H1 (cell line): ENCODE measurements at regions of chr14 and their contacts with region 1.

Region 1: GRCh38 chr14:22872033-22872832 is 693 bp downstream of the LRP10 start:
- DNase-seq: peak in 1 of 2 experiments; percentile 94
- H3K4me3 ChIP-seq: peak overlapping the region; percentile 64 to 86 (median 80)
- H3K27ac ChIP-seq: no peak overlapping the region
- H3K4me1 ChIP-seq: peaks cover 0 to 9% (median 3%) of the 10 kb centered on the region in 4 experiments; a peak in 4 of 7 replicates
- H3K27me3 ChIP-seq: no peaks in the 10 kb centered on the region
- CTCF ChIP-seq: peak; percentile 81 to 94 (median 91)
- EP300 ChIP-seq: 0 out of 3 replicates have a peak, but pooled peaks of 1 of the 2 experiments have one; percentile 59
- POLR2A ChIP-seq: peak in 1 of 2 experiments; percentile 28; a peak in 1 of 3 replicates
- RAD21 ChIP-seq: peak; percentile 75 to 84

Region 2: DNA sequence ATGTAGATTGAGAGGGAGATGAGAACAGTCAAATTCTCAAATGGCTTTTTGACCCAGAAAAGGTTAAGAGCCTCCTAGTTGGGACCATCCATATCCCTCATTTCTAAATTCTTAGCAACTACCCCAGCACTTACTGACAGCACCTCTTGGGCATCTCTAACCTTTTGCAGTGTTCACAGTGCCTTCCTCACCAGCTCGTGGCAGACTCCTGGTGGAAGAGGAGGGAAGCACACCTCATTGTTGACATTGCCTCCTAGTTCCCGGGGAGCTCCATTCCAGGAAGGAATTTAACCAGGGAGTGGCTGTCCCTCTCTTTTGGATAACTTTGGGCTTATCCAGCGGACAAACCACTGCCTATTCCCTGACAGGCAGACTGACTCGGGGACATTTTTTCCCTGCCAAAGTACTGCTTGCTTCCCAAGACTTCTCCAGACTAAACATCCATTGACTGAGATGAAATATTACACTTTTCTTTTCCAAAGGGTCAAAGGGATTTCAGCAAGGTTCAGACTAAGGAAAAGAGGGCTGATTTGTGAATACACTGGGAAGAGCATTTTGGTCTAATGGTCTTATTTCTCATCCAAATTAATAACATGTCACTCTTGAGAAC is 219.1 kb before region 1 on chr14:
- CTCF ChIA-PET with region 1: no interaction called
- POLR2A ChIA-PET with region 1: no interaction called
- DNase-seq: peak; percentile 62 to 84
- H3K4me3 ChIP-seq: no peak overlapping the region
- H3K27ac ChIP-seq: no peak overlapping the region
- H3K4me1 ChIP-seq: no peaks in the 10 kb centered on the region
- H3K27me3 ChIP-seq: 0 out of 7 replicates have a peak, but pooled peaks cover 0 to 2% (median 0%) of the 10 kb centered on the region in 4 experiments
- CTCF ChIP-seq: peak; percentile 87 to 94 (median 89)
- EP300 ChIP-seq: no peak
- POLR2A ChIP-seq: no peak
- RAD21 ChIP-seq: peak; percentile 87

Region 3: GRCh38 chr14:22829661-22830442 is 42.4 kb before region 1 on chr14 and contains the start of gene MRPL52:
- CTCF ChIA-PET with region 1: interaction called, 1,562 read pairs
- POLR2A ChIA-PET with region 1: interaction called, 6 read pairs
- DNase-seq: peak in 1 of 2 experiments; percentile 80
- H3K4me3 ChIP-seq: peak within 1 kb of the TSS; percentile 86 to 89 (median 88)
- H3K27ac ChIP-seq: peak within 1 kb of the TSS; percentile 43; the same call in 1 of the 2 replicates
- H3K4me1 ChIP-seq: peaks cover 0 to 5% (median 0%) of the 10 kb centered on the region in 4 experiments; a peak in 2 of 7 replicates
- H3K27me3 ChIP-seq: no peaks in the 10 kb centered on the region
- CTCF ChIP-seq: no peak
- EP300 ChIP-seq: 0 out of 3 replicates have a peak, but pooled peaks of 1 of the 2 experiments have one; percentile 29
- POLR2A ChIP-seq: peak in 1 of 2 experiments; percentile 61; a peak in 2 of 3 replicates
- RAD21 ChIP-seq: no peak
- total RNA-seq, gene MRPL52: 172 and 176 TPM in 2 replicates

Region 4: DNA sequence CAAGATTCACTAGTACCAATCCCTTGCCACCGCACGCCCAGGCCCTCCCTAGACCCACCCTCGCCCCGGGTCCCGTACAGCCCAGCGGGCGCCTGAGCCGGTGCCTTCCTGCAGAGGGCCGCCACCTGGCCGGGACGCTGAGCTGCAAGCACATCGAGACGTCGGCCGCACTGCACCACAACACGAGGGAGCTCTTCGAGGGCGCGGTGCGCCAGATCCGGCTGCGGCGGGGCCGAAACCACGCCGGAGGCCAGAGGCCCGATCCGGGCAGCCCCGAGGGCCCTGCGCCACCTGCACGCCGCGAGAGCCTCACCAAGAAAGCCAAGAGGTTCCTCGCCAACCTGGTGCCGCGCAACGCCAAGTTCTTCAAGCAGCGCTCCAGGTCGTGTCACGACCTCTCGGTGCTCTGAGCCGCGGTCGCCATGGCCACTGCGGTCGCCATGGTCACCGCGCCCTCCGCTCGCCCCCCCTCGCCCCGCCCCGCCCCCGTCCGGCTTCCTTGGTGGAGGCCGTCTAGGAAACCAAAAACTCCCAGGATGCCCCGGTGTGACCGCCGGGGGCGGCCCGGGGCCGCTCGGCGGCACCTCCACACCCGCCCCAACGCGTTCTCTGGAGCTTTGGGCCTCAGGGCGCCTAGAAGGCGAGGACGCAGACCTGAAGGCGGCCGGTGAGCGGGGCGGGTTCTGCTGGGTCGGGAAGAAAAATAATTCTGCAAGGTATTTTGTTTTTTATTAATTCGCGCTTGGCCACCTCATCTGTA is 14.4 kb after region 1 on chr14:
- CTCF ChIA-PET with region 1: interaction called, 135 read pairs
- POLR2A ChIA-PET with region 1: interaction called, 54 read pairs
- DNase-seq: peak in 1 of 2 experiments; percentile 87
- H3K4me3 ChIP-seq: peak overlapping the region; percentile 57 to 83 (median 65)
- H3K27ac ChIP-seq: peak overlapping the region; percentile 25
- H3K4me1 ChIP-seq: peaks cover 7 to 21% (median 12%) of the 10 kb centered on the region in 4 experiments
- H3K27me3 ChIP-seq: peaks cover 0 to 17% (median 11%) of the 10 kb centered on the region in 4 experiments; a peak in 6 of 7 replicates
- CTCF ChIP-seq: peak; percentile 17 to 35 (median 21); a peak in 3 of 4 replicates
- EP300 ChIP-seq: no peak
- POLR2A ChIP-seq: peak in 1 of 2 experiments; percentile 75; a peak in 2 of 3 replicates
- RAD21 ChIP-seq: peak in 1 of 2 experiments; percentile 6; a peak in 2 of 4 replicates

Region 5: GRCh38 chr14:22900081-22900799 is 28.0 kb after region 1 on chr14:
- CTCF ChIA-PET with region 1: interaction called, 135 read pairs
- POLR2A ChIA-PET with region 1: interaction called, 3 read pairs
- DNase-seq: peak in 1 of 2 experiments; percentile 58
- H3K4me3 ChIP-seq: 0 out of 8 replicates have a peak overlapping the region, but pooled peaks of 1 of the 4 experiments have one; percentile 13
- H3K27ac ChIP-seq: no peak overlapping the region
- H3K4me1 ChIP-seq: peaks cover 0 to 8% (median 4%) of the 10 kb centered on the region in 4 experiments; a peak in 2 of 7 replicates
- H3K27me3 ChIP-seq: peaks cover 10 to 35% (median 28%) of the 10 kb centered on the region in 4 experiments
- CTCF ChIP-seq: peak; percentile 1 to 75 (median 64)
- EP300 ChIP-seq: no peak
- POLR2A ChIP-seq: no peak
- RAD21 ChIP-seq: peak; percentile 64 to 75

Region 6: DNA sequence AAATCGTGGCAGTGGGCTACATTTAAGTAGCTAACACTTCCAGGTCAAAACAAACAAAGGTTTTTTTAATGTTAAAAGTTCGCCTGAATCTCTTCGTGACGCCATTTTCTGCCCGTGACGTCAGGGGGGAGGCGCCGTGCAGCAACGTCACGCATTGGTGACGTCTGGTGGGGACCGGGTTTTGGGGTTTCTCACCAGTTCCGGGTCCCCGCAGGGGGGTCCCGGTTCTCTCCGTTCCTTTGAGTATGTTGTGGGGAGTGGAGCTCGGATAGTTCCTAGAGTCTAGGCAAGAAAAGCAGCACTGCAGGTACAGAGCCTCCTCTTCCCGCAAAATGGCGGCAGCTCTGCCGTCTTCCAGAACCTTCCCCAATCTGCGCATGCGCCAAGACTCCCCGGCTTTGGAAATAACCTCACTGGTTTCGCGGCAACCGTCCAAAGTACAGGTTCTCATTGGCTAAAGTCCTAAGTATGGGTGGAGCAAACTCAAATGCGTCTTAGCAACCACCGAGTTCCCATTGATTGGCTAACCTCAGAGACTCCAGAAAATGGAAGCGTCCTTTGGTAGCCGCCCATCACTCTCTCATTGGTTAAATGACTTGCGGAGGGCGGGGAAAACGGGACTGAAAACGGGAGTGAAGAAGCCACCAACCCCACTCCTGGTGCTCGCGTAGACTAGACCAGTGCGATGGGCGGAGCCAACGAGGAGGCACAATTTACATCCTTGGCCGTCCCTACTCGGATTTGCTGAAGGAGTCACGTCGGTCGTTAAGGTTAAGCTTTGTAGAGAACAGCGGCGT is 46.8 kb after region 1 on chr14 and contains the start of gene RBM23:
- CTCF ChIA-PET with region 1: interaction called, 3 read pairs
- POLR2A ChIA-PET with region 1: interaction called, 16 read pairs
- DNase-seq: peak; percentile 98 to 99
- H3K4me3 ChIP-seq: peak within 1 kb of the TSS; percentile 79 to 93 (median 92)
- H3K27ac ChIP-seq: peak within 1 kb of the TSS; percentile 98
- H3K4me1 ChIP-seq: peaks cover 0 to 7% (median 3%) of the 10 kb centered on the region in 4 experiments; a peak in 5 of 7 replicates
- H3K27me3 ChIP-seq: no peaks in the 10 kb centered on the region; a peak in 1 of 7 replicates
- CTCF ChIP-seq: no peak
- EP300 ChIP-seq: no peak
- POLR2A ChIP-seq: peak; percentile 80 to 98
- RAD21 ChIP-seq: no peak
- total RNA-seq, gene RBM23: 43.1 and 43.3 TPM in 2 replicates

Region 7: GRCh38 chr14:22997676-22998323 is 125.6 kb after region 1 on chr14:
- CTCF ChIA-PET with region 1: no interaction called
- POLR2A ChIA-PET with region 1: no interaction called
- DNase-seq: no peak
- H3K4me3 ChIP-seq: no peak overlapping the region
- H3K27ac ChIP-seq: no peak overlapping the region
- H3K4me1 ChIP-seq: peaks cover 0 to 5% (median 2%) of the 10 kb centered on the region in 4 experiments; a peak in 2 of 7 replicates
- H3K27me3 ChIP-seq: no peaks in the 10 kb centered on the region
- CTCF ChIP-seq: no peak
- EP300 ChIP-seq: no peak
- POLR2A ChIP-seq: no peak
- RAD21 ChIP-seq: no peak

Region 8: DNA sequence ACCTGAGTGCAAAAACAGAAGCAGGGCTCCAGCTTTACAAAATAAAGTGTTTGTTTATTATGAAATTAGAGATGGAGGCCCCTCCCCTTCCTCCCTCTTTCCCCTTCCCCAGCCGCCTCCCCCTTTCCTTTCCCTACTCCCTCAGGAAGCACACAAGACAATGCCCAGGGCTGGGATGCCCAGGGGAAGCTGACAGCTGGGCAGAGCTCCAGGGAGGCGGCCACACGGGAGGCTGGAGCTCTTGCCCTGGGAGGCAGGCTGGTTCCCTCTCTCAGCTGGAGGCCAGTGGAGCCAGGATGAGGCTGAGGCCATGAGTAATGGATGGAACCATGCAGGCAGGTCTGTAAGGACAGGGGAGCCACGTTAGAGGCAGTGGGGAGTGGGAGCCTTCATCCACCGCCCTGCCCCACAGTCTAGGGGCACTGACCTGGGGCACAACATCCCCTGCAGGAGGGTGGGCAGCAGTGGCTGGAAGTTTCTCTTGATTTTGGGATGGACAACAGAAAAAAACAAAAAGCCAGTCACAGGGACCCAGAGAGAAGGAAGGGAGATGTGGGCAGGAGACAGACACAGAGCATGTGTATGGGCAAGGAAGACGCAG is 174.9 kb after region 1 on chr14:
- CTCF ChIA-PET with region 1: no interaction called
- POLR2A ChIA-PET with region 1: no interaction called
- DNase-seq: no peak
- H3K4me3 ChIP-seq: no peak overlapping the region
- H3K27ac ChIP-seq: no peak overlapping the region
- H3K4me1 ChIP-seq: peaks cover 0 to 7% (median 0%) of the 10 kb centered on the region in 4 experiments; a peak in 1 of 7 replicates
- H3K27me3 ChIP-seq: no peaks in the 10 kb centered on the region
- CTCF ChIP-seq: no peak
- EP300 ChIP-seq: no peak
- POLR2A ChIP-seq: no peak
- RAD21 ChIP-seq: no peak